ENCODE measurements at regions of chr3 and their contacts with region 1.

Region 1: DNA sequence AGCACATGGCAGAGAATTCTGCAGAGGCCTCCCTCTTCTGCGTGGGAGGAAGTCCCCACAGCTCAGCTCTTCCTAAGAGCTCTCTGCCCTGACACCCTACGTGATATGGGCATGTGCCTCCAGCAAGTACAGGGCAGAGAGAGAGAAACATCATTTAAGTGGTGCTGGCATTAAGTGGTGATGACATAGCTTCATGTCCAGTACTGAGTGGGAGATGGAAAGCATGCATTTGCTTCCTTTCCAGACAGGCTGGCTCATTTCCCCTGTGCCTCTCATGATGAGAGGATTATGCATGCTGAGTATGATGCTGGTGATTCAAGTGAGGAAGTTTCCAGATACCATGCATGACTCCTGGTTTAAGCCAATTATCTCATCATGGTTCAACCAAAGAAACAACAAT is 26.9 kb downstream of the BFSP2 start:
- DNase-seq: no peak
- ATAC-seq: no peak
- H3K4me3 Mint-ChIP-seq: no peak overlapping the region
- H3K27ac Mint-ChIP-seq: no peak overlapping the region
- H3K4me1 Mint-ChIP-seq: peaks cover 15% of the 10 kb centered on the region
- H3K27me3 Mint-ChIP-seq: no peaks in the 10 kb centered on the region
- CTCF ChIP-seq: no peak

Region 2: DNA sequence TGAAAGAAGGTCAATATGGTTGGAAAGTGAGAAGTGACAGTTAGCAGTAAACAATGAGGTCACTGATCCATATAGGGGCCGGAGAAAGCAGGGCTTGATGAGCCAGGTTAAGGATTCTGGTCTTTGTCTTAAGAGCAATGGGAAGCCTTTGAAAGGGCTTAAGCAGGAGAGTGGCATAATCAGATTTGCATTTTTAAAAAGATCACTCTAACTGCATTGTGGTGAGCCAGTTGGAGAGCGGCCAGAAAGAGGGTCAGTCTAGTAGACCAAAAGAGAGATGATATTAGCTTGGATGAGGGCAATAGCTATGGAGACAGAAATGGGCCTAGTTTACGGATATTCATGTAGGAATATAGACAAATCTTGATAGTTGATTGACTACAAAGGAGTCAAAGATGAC is 1438.5 kb before region 1 on chr3:
- CTCF ChIA-PET with region 1: no interaction called
- POLR2A ChIA-PET with region 1: no interaction called
- intact Hi-C with region 1: no loop called
- DNase-seq: no peak
- ATAC-seq: no peak
- H3K4me3 Mint-ChIP-seq: no peak overlapping the region
- H3K27ac Mint-ChIP-seq: no peak overlapping the region
- H3K4me1 Mint-ChIP-seq: no peaks in the 10 kb centered on the region
- H3K27me3 Mint-ChIP-seq: no peaks in the 10 kb centered on the region
- CTCF ChIP-seq: no peak

Region 3: DNA sequence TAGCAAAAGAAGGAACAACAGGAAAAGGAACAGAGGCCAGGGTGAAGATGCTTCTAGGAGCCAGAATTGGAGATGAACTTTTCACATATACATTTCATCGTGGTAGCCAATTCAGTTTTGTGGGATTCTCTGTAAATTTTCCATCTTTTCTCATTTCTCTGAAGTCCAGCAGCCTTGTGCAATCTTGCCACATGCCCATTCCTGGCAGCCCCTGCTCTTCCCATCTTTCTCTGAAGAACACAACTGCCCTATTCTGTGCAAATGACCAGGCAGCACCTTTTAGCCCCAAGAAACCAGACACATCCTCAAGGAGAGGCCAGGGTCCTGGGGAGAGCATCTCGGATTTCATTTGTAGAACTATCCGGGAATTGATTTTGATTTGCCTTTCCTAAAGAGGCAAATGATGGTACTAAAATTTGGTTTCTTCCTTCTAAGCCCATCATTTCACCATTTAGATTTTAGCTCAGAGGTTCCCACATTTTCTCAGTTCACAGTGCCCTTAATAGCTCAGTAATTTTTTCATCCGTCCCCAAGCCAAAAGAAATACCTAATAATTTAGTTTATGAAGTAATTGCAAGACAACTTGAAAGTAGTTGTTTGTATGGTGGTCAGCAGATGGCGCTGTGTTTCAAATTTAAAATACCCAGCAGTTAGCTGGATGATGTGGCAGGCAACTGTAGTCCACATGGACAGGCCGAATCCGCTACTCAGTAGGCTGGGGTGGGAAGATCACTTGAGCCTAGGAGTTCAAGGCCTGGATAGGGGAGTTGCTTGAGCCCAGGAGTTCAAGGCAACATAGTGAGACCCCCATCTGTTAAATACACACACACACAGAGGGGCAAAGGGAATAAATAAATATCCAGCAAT is 890.9 kb before region 1 on chr3:
- CTCF ChIA-PET with region 1: no interaction called
- POLR2A ChIA-PET with region 1: no interaction called
- intact Hi-C with region 1: loop called (anchors 2 kb)
- DNase-seq: peak; percentile 15
- ATAC-seq: no peak
- H3K4me3 Mint-ChIP-seq: no peak overlapping the region
- H3K27ac Mint-ChIP-seq: no peak overlapping the region
- H3K4me1 Mint-ChIP-seq: no peaks in the 10 kb centered on the region
- H3K27me3 Mint-ChIP-seq: no peaks in the 10 kb centered on the region
- CTCF ChIP-seq: peak; percentile 78

Region 4: GRCh38 chr3:132730891-132731580 is 695.7 kb before region 1 on chr3:
- CTCF ChIA-PET with region 1: interaction called, 22 read pairs
- POLR2A ChIA-PET with region 1: interaction called, 3 read pairs
- intact Hi-C with region 1: loop called (anchors 1 kb)
- DNase-seq: no peak
- ATAC-seq: no peak
- H3K4me3 Mint-ChIP-seq: no peak overlapping the region
- H3K27ac Mint-ChIP-seq: no peak overlapping the region
- H3K4me1 Mint-ChIP-seq: peaks cover 4% of the 10 kb centered on the region
- H3K27me3 Mint-ChIP-seq: peaks cover 10% of the 10 kb centered on the region
- CTCF ChIP-seq: no peak

Region 5: GRCh38 chr3:133448478-133449122 is 21.9 kb after region 1 on chr3:
- CTCF ChIA-PET with region 1: no interaction called
- POLR2A ChIA-PET with region 1: no interaction called
- intact Hi-C with region 1: loop called (anchors 2 kb)
- DNase-seq: peak; percentile 40
- ATAC-seq: peak; percentile 88
- H3K4me3 Mint-ChIP-seq: peak overlapping the region; percentile 80
- H3K27ac Mint-ChIP-seq: peak overlapping the region; percentile 95
- H3K4me1 Mint-ChIP-seq: peaks cover 55% of the 10 kb centered on the region
- H3K27me3 Mint-ChIP-seq: peaks cover 6% of the 10 kb centered on the region
- CTCF ChIP-seq: no peak

Region 6: GRCh38 chr3:133661454-133662277 is 234.9 kb after region 1 on chr3 and contains the start of gene TOPBP1:
- CTCF ChIA-PET with region 1: no interaction called
- POLR2A ChIA-PET with region 1: no interaction called
- intact Hi-C with region 1: loop called (anchors 5 kb)
- DNase-seq: peak; percentile 76
- ATAC-seq: peak; percentile 86
- H3K4me3 Mint-ChIP-seq: peak within 1 kb of the TSS; percentile 98
- H3K27ac Mint-ChIP-seq: peak within 1 kb of the TSS; percentile 95
- H3K4me1 Mint-ChIP-seq: peaks cover 34% of the 10 kb centered on the region
- H3K27me3 Mint-ChIP-seq: no peaks in the 10 kb centered on the region
- CTCF ChIP-seq: no peak
- total RNA-seq, gene TOPBP1: 45.8 and 49.9 TPM in 2 replicates

Region 7: GRCh38 chr3:133851266-133851906 is 424.7 kb after region 1 on chr3:
- CTCF ChIA-PET with region 1: no interaction called
- POLR2A ChIA-PET with region 1: no interaction called
- intact Hi-C with region 1: no loop called
- DNase-seq: no peak
- ATAC-seq: no peak
- H3K4me3 Mint-ChIP-seq: no peak overlapping the region
- H3K27ac Mint-ChIP-seq: no peak overlapping the region
- H3K4me1 Mint-ChIP-seq: peaks cover 3% of the 10 kb centered on the region
- H3K27me3 Mint-ChIP-seq: peaks cover 7% of the 10 kb centered on the region
- CTCF ChIP-seq: no peak

Region 8: DNA sequence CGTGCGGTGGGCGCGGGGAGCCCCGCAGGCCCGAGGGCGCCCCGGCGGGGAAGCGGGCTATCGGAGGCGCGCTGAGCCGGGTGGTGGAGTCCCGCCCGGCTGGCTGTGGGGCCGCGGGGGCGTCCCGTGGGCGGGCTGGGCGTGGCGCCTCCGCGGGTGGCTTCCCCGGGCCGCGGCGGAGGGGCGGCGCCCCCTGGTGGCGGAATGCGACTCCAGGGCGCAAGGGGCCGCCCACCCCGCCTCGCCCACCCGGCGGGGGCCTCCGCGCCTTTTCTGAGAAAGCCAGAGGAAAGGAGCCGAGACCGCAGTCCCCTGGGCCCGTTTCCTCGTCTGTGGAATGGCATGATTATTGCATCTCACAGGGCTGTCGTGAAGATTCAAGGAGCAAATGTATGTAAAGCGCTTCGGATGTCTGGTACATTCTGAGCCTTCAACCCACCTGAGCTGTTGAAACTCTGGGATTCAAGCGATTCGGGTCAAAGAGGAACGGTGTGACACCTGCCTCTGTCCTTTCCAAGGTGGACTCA is 500.9 kb after region 1 on chr3:
- CTCF ChIA-PET with region 1: no interaction called
- POLR2A ChIA-PET with region 1: no interaction called
- intact Hi-C with region 1: loop called (anchors 5 kb)
- DNase-seq: peak; percentile 86
- ATAC-seq: peak; percentile 98
- H3K4me3 Mint-ChIP-seq: peak overlapping the region; percentile 77
- H3K27ac Mint-ChIP-seq: no peak overlapping the region
- H3K4me1 Mint-ChIP-seq: peaks cover 9% of the 10 kb centered on the region
- H3K27me3 Mint-ChIP-seq: peaks cover 16% of the 10 kb centered on the region
- CTCF ChIP-seq: peak; percentile 23

Measured in activated B cell treated with CpG ODN at 0.5 μM for 24 hours (primary cell).